ENCODE measurements at regions of chr2 and their contacts with region 1.

Region 1: DNA sequence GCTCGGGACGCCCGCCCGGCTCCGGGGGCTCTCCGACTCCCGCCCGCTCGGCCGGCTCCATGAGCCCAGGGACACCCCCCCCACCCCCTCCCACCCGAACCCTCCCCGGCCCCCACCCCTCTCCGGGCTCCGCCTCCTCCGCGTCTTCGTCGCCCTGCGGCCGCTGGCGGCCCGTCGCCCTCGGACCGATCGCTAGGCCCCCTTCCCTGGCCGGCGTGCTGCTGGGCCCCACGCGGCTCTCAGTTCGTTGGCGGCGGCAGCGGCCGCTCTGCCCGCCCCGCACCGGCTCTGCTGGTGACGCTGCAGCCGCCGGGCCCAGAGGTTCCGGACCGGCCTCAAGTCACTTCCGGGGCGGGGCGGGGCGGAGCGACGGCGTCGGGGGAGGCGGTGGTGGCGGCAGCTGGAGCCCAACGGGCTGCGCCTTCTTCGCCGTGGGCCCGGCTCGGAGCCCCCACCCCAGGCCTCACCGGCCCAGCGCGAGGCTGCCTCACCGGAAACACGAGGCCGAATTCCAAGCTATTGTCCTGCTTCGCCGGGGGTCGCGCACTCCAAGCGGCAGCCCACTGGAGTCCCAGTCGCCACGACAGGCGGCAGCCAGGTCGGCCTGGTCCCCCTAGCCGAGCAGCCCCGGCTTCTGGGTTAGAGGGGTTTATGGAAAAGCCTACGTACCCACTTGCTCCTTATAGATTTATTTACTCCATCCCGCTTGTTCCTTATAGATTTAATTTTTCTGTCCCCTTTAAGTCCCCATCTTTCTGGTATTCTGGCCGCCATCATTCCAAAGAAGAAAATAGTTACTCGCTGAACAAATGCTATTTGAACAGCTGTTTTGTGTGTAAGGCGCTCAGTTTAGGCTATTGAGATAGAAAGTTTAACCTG is at the start of gene PSME4:
- DNase-seq: peak; percentile 90
- H3K4me3 Mint-ChIP-seq: peak within 1 kb of the TSS; percentile 93
- H3K27ac Mint-ChIP-seq: peak within 1 kb of the TSS; percentile 96
- H3K4me1 Mint-ChIP-seq: peaks cover 30% of the 10 kb centered on the region
- H3K27me3 Mint-ChIP-seq: no peaks in the 10 kb centered on the region
- total RNA-seq, gene PSME4: 52.0 and 57.3 TPM in 2 replicates

Region 2: GRCh38 chr2:53568469-53568868 is 402.5 kb before region 1 on chr2:
- intact Hi-C with region 1: no loop called
- DNase-seq: no peak
- H3K4me3 Mint-ChIP-seq: no peak overlapping the region
- H3K27ac Mint-ChIP-seq: no peak overlapping the region
- H3K4me1 Mint-ChIP-seq: no peaks in the 10 kb centered on the region
- H3K27me3 Mint-ChIP-seq: no peaks in the 10 kb centered on the region

Region 3: GRCh38 chr2:53886406-53887280 is 84.3 kb before region 1 on chr2:
- intact Hi-C with region 1: loop called (anchors 5 kb)
- DNase-seq: no peak
- H3K4me3 Mint-ChIP-seq: no peak overlapping the region
- H3K27ac Mint-ChIP-seq: peak overlapping the region; percentile 47
- H3K4me1 Mint-ChIP-seq: peaks cover 43% of the 10 kb centered on the region
- H3K27me3 Mint-ChIP-seq: no peaks in the 10 kb centered on the region

Region 4: DNA sequence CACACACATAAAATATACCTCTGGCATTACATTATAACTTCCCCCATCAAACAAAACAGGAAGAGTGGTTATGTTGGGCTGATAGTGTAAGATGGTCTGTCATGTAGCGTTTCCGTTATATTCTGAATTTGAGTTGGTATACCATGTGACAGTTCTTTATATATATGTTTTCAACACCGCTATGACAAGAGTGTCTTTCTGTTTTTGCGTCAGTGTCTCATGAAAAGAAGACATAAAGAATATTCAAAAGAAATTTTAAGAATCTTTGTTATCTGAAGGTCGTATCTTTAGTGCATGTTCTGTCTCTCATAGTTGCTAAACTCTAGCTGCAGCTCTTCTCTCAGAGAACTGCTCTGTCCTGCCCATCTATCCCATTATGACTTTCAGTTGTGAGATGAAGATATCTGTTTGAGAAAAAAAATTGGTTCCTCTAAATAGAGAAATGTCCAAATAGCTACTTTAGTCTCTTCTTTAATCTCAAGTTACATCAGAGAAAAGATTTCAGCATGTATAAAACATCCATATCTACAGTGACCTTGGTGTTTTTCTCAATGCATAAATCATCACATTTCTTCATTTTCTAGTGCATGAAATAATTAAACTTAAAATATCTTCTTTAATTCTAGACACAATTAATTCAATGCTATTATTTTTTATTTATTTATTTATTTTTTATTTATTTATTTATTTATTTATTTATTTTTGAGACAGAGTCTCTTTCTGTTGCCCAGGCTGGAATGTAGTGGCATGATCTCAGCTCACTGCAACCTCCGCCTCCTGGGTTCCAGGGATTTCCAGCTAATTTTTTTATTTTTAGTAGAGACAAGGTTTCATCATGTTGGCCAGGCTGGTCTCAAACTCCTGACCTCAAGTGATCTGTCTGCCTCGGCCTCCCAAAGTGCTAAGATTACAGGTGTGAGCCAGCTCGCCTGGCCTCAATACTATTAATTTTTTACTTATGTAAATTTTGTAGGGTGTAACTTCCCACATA is 24.1 kb after region 1 on chr2:
- intact Hi-C with region 1: loop called (anchors 1 kb)
- DNase-seq: no peak
- H3K4me3 Mint-ChIP-seq: peak overlapping the region; percentile 43
- H3K27ac Mint-ChIP-seq: peak overlapping the region; percentile 72
- H3K4me1 Mint-ChIP-seq: peaks cover 19% of the 10 kb centered on the region
- H3K27me3 Mint-ChIP-seq: no peaks in the 10 kb centered on the region

Region 5: GRCh38 chr2:54115284-54116137 is 144.5 kb after region 1 on chr2 and contains the start of gene ACYP2:
- intact Hi-C with region 1: loop called (anchors 1 kb)
- DNase-seq: peak; percentile 88
- H3K4me3 Mint-ChIP-seq: peak within 1 kb of the TSS; percentile 89
- H3K27ac Mint-ChIP-seq: peak within 1 kb of the TSS; percentile 97
- H3K4me1 Mint-ChIP-seq: peaks cover 7% of the 10 kb centered on the region
- H3K27me3 Mint-ChIP-seq: peaks cover 8% of the 10 kb centered on the region
- total RNA-seq, gene ACYP2: 4.3 and 6.5 TPM in 2 replicates

Measured in activated T-helper 2 cell treated with anti-CD3 and anti-CD28 coated beads, Interferon-gamma antibody, Interleukin-2, Interleukin-4, amounts not matched to agents 10 μg/mL and 5 μg/mL and 100 μg/mL, durations not matched to agents 14 hours and 24 hours and 36 hours (primary cell).